ENCODE measurements at regions of chr5 and their contacts with region 1.

Region 1: DNA sequence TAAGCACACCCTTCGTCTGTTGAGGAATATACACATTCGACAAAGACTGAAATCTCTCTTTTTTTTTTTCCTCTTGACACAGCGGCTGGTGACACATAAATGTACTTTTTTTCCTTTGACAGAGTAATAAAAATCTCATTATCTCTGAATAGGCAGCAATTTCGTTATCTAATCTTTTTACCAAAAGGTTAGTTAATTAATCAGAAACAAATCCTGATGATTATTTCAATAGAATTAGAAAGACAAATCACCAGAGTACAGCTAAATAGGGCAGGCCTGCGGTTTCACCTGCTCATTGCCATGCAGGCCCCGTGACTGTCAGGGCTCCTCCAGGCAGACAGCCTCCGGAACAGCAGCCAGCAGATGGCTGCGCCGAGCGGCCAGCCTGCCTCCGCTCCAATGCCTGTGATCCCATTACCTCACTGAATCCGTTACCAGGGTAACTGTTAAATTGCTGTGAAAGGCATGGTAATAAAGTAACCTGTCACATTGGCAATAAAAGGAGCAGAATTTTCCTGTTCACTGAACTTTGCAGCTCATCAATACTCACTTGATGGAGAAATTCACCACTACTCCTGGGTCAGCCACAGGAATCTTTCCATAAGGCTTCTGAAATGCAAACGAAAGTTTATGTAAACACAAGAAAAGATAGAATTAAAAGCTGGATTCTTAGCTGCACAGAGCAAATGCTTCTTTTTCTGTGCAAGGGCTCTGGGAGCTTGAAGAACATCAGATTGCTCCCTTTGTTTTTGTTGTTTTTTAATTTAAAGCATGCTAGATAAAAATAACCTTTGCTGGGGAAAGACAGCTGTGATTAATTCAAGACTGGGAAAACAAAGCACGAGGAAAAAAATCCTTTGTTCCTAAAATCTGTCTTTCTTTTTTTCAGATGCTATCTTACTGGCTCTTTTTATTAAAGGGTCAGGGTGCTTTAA is 666.4 kb upstream of the ZNF608 start:
- DNase-seq: no peak
- ATAC-seq: peak; percentile 80
- H3K4me3 ChIP-seq: peak overlapping the region; percentile 11 to 34; a peak in 3 of 4 replicates
- H3K27ac ChIP-seq: peak overlapping the region; percentile 95
- H3K4me1 ChIP-seq: peaks cover 67% of the 10 kb centered on the region
- H3K27me3 ChIP-seq: no peaks in the 10 kb centered on the region
- CTCF ChIP-seq: peak; percentile 83

Region 2: GRCh38 chr5:123937230-123937629 is 1475.6 kb before region 1 on chr5:
- CTCF ChIA-PET with region 1: no interaction called
- POLR2A ChIA-PET with region 1: no interaction called
- in situ Hi-C with region 1: no loop called
- intact Hi-C with region 1: loop called (anchors 5 kb)
- DNase-seq: no peak
- ATAC-seq: peak; percentile 80
- H3K4me3 ChIP-seq: no peak overlapping the region
- H3K27ac ChIP-seq: peak overlapping the region; percentile 73
- H3K4me1 ChIP-seq: no peaks in the 10 kb centered on the region
- H3K27me3 ChIP-seq: no peaks in the 10 kb centered on the region
- CTCF ChIP-seq: peak; percentile 66

Region 3: GRCh38 chr5:124649491-124650146 is 763.2 kb before region 1 on chr5:
- CTCF ChIA-PET with region 1: no interaction called
- POLR2A ChIA-PET with region 1: no interaction called
- in situ Hi-C with region 1: no loop called
- intact Hi-C with region 1: loop called (anchors 10 kb)
- DNase-seq: no peak
- ATAC-seq: peak; percentile 36; the same call in 1 of the 2 replicates
- H3K4me3 ChIP-seq: peak overlapping the region; percentile 11 to 23; a peak in 2 of 4 replicates
- H3K27ac ChIP-seq: peak overlapping the region; percentile 100
- H3K4me1 ChIP-seq: peaks cover 60% of the 10 kb centered on the region
- H3K27me3 ChIP-seq: no peaks in the 10 kb centered on the region
- CTCF ChIP-seq: no peak

Region 4: GRCh38 chr5:125267636-125268248 is 145.1 kb before region 1 on chr5:
- CTCF ChIA-PET with region 1: no interaction called
- POLR2A ChIA-PET with region 1: no interaction called
- in situ Hi-C with region 1: no loop called
- intact Hi-C with region 1: no loop called
- DNase-seq: no peak
- ATAC-seq: no peak
- H3K4me3 ChIP-seq: no peak overlapping the region
- H3K27ac ChIP-seq: 0 out of 2 replicates have a peak overlapping the region, but pooled peaks have one; percentile 15
- H3K4me1 ChIP-seq: no peaks in the 10 kb centered on the region
- H3K27me3 ChIP-seq: no peaks in the 10 kb centered on the region
- CTCF ChIP-seq: no peak

Region 5: DNA sequence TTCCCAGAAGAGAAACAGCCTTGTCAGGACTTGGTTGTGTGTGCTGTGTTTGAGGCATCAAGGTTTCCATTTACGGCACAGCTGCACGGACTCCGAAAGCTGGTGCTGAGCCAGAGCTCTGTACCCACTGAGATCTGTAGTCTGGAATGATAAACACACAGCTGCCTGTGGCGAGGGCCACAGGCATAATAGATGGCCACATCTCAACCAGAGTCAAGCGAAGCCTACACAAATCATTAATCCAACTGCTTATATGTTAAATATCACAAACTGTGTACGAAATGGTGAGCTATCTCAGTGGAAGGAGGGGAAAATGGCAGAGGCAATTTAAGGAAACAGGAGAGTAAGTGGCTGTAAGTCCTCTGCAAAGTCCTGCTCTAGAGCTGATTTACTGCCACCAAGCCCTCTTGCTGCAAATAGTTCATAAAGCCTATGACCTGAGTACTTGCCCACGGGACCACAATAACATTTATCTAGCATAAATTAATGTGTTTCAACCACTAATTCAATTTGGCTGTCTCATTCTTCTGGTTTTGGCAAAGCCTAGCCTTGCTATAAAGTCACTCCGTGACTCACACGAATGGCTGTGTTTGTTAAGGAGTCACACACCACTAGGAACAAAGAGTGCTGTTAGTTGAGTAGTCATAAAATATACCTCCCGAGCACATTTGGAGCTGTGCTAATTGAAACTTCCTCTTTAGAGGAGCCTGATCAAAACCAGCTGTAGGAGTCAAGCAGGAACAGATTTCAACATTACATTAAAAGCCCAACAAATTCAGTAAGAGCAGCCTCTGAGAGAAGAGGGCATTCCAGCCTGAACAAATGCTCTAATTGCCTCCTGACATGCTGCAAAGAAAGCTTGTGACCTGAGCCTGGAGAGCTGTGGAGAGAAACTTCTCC is 72.2 kb after region 1 on chr5:
- CTCF ChIA-PET with region 1: no interaction called
- POLR2A ChIA-PET with region 1: no interaction called
- in situ Hi-C with region 1: no loop called
- intact Hi-C with region 1: loop called (anchors 1 kb)
- DNase-seq: peak; percentile 90
- ATAC-seq: peak; percentile 96
- H3K4me3 ChIP-seq: peak overlapping the region; percentile 18 to 41; a peak in 3 of 4 replicates
- H3K27ac ChIP-seq: peak overlapping the region; percentile 100
- H3K4me1 ChIP-seq: peaks cover 39% of the 10 kb centered on the region
- H3K27me3 ChIP-seq: no peaks in the 10 kb centered on the region
- CTCF ChIP-seq: no peak

Region 6: GRCh38 chr5:125575891-125576505 is 163.2 kb after region 1 on chr5:
- CTCF ChIA-PET with region 1: no interaction called
- POLR2A ChIA-PET with region 1: no interaction called
- in situ Hi-C with region 1: no loop called
- intact Hi-C with region 1: loop called (anchors 10 kb)
- DNase-seq: no peak
- ATAC-seq: peak; percentile 88
- H3K4me3 ChIP-seq: peak overlapping the region in 1 of 2 experiments; percentile 13; a peak in 1 of 4 replicates
- H3K27ac ChIP-seq: peak overlapping the region; percentile 81
- H3K4me1 ChIP-seq: peaks cover 38% of the 10 kb centered on the region
- H3K27me3 ChIP-seq: no peaks in the 10 kb centered on the region
- CTCF ChIP-seq: no peak

Region 7: GRCh38 chr5:125659316-125660023 is 246.6 kb after region 1 on chr5:
- CTCF ChIA-PET with region 1: no interaction called
- POLR2A ChIA-PET with region 1: interaction called, 12 read pairs
- in situ Hi-C with region 1: no loop called
- intact Hi-C with region 1: no loop called
- DNase-seq: no peak
- ATAC-seq: no peak
- H3K4me3 ChIP-seq: no peak overlapping the region
- H3K27ac ChIP-seq: peak overlapping the region; percentile 67
- H3K4me1 ChIP-seq: no peaks in the 10 kb centered on the region; the same call in 1 of the 2 replicates
- H3K27me3 ChIP-seq: no peaks in the 10 kb centered on the region
- CTCF ChIP-seq: no peak

Region 8: DNA sequence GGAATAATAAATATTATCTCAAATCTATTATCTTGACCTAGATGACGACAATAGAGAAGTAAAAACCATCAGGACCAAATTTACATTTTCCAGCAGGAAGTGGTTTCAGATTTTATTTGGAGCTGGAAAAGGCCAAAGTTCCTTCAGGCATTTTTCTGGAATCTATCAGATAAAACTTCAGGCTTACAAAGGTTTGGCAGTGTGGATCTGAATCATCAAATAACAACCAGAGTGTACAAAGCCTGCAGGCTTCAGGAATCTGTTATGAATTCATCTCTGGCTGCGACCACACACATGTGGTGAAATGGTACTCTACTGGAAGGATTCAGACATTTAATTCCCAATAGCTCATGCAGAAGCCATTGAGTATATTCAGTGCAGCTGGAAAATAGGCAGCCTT is 283.9 kb after region 1 on chr5:
- CTCF ChIA-PET with region 1: no interaction called
- POLR2A ChIA-PET with region 1: interaction called, 3 read pairs
- in situ Hi-C with region 1: no loop called
- intact Hi-C with region 1: loop called (anchors 10 kb)
- DNase-seq: no peak
- ATAC-seq: peak; percentile 87
- H3K4me3 ChIP-seq: no peak overlapping the region
- H3K27ac ChIP-seq: peak overlapping the region; percentile 93
- H3K4me1 ChIP-seq: peaks cover 39% of the 10 kb centered on the region
- H3K27me3 ChIP-seq: no peaks in the 10 kb centered on the region
- CTCF ChIP-seq: no peak